Panc1 (cell line): ENCODE measurements at regions of chr3 and their contacts with region 1.

Region 1: DNA sequence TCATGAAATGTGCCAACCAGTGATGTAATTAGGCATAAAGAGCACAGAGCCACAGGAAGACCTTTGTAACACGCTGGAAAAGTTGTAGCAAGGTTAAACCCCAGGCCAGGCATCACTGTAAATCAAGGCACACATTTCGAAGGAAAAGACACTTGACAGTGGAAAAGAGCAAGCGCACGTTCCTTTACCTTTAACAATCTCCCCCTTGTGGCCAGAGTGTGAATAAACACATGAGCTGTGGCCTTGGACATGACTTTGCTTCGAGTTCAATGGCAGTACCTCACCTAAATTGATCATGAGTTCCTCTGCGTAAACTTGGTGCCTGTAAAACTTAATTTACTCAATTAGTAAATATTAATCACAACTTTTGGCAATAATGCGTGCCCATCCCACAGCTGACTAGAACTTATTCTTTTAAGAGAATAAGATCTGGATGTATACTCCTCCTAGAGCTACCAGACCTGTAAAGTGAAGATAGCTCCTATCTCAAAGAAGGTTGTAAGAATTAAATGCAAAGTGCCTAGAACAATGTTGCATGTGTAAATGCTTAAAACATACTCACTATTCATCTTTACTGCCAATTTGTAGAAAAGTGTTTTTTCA is 757.0 kb upstream of the NECTIN3 start:
- DNase-seq: peak; percentile 54
- ATAC-seq: peak; percentile 88
- H3K4me3 ChIP-seq: no peak overlapping the region
- H3K27ac ChIP-seq: no peak overlapping the region
- H3K4me1 ChIP-seq: no peaks in the 10 kb centered on the region; the same call in 1 of the 2 replicates
- H3K27me3 ChIP-seq: no peaks in the 10 kb centered on the region
- CTCF ChIP-seq: peak; percentile 86

Region 2: GRCh38 chr3:109275702-109276293 is 1038.8 kb before region 1 on chr3:
- CTCF ChIA-PET with region 1: no interaction called
- POLR2A ChIA-PET with region 1: no interaction called
- in situ Hi-C with region 1: no loop called
- intact Hi-C with region 1: loop called (anchors 10 kb)
- DNase-seq: peak; percentile 5
- ATAC-seq: peak; percentile 76
- H3K4me3 ChIP-seq: no peak overlapping the region
- H3K27ac ChIP-seq: no peak overlapping the region
- H3K4me1 ChIP-seq: no peaks in the 10 kb centered on the region
- H3K27me3 ChIP-seq: no peaks in the 10 kb centered on the region
- CTCF ChIP-seq: peak; percentile 93

Region 3: GRCh38 chr3:109532257-109533216 is 782.1 kb before region 1 on chr3:
- CTCF ChIA-PET with region 1: no interaction called
- POLR2A ChIA-PET with region 1: no interaction called
- in situ Hi-C with region 1: no loop called
- intact Hi-C with region 1: loop called (anchors 10 kb)
- DNase-seq: no peak
- ATAC-seq: peak; percentile 69; the same call in 1 of the 2 replicates
- H3K4me3 ChIP-seq: no peak overlapping the region
- H3K27ac ChIP-seq: no peak overlapping the region
- H3K4me1 ChIP-seq: no peaks in the 10 kb centered on the region
- H3K27me3 ChIP-seq: no peaks in the 10 kb centered on the region
- CTCF ChIP-seq: peak; percentile 45

Region 4: GRCh38 chr3:109731620-109732473 is 582.8 kb before region 1 on chr3:
- CTCF ChIA-PET with region 1: no interaction called
- POLR2A ChIA-PET with region 1: no interaction called
- in situ Hi-C with region 1: no loop called
- intact Hi-C with region 1: loop called (anchors 5 kb)
- DNase-seq: peak; percentile 35
- ATAC-seq: peak; percentile 82
- H3K4me3 ChIP-seq: no peak overlapping the region
- H3K27ac ChIP-seq: no peak overlapping the region
- H3K4me1 ChIP-seq: no peaks in the 10 kb centered on the region
- H3K27me3 ChIP-seq: no peaks in the 10 kb centered on the region
- CTCF ChIP-seq: peak; percentile 78